ENCODE measurements at regions of chr17 and their contacts with region 1.

Region 1: DNA sequence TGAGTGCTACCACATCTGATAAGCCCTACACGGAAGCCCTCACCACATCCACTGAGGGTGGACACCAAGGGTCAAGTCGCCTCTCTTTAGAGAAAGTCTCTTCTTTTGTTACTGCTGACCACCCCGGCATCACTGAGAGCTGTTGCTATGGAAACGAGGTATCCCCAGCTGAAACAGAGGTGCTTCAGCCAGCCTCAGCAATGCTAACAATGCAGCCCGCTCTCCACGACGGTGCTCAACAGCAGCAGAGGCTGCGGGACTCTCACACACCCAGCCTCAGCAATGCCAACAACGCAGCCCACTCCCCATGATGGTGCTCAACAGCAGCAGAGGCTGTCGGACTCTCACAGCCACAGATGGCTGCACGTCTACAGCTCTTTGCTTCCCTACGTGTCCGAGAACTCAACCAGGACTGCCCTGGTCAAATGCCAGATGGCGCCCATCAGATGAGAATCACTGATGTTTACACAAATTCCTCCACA is 41.4 kb downstream of the VPS53 start:
- DNase-seq: peak; percentile 65
- ATAC-seq: peak; percentile 94
- H3K4me3 Mint-ChIP-seq: no peak overlapping the region
- H3K27ac Mint-ChIP-seq: peak overlapping the region; percentile 95
- H3K4me1 Mint-ChIP-seq: peaks cover 26% of the 10 kb centered on the region
- H3K27me3 Mint-ChIP-seq: no peaks in the 10 kb centered on the region
- CTCF ChIP-seq: no peak

Region 2: DNA sequence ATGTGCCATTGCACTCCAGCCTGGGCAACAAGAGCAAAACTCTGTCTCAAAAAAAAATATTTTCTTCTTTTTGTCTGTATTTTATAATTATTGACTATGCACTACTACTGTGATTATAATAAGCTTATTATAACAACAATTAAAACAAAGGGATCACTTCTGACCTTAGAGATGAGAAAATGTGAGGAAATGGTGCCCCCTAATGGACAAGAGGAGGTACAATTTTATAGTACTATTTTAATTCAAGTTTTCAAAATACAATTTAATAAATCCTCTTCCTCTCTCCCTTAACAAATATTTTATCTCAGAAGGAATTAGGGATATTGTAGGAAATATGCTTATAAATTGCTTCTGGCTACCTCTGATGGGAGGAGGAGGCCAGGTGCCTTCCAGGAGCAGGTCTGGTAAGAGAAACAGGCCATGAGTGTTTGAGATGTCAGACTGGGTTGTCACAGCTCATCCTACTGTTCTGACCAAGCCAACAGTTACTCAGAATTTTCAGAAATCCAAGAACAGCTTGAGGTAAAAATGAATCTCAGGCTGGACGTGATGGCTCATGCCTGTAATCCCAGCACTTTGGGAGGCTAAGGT is 27.4 kb after region 1 on chr17:
- CTCF ChIA-PET with region 1: interaction called, 14 read pairs
- POLR2A ChIA-PET with region 1: no interaction called
- DNase-seq: no peak
- ATAC-seq: no peak
- H3K4me3 Mint-ChIP-seq: no peak overlapping the region
- H3K27ac Mint-ChIP-seq: no peak overlapping the region
- H3K4me1 Mint-ChIP-seq: no peaks in the 10 kb centered on the region
- H3K27me3 Mint-ChIP-seq: no peaks in the 10 kb centered on the region
- CTCF ChIP-seq: peak; percentile 28

Region 3: GRCh38 chr17:740240-741017 is 67.2 kb after region 1 on chr17:
- CTCF ChIA-PET with region 1: no interaction called
- POLR2A ChIA-PET with region 1: no interaction called
- DNase-seq: no peak
- ATAC-seq: no peak
- H3K4me3 Mint-ChIP-seq: no peak overlapping the region
- H3K27ac Mint-ChIP-seq: no peak overlapping the region
- H3K4me1 Mint-ChIP-seq: no peaks in the 10 kb centered on the region
- H3K27me3 Mint-ChIP-seq: no peaks in the 10 kb centered on the region
- CTCF ChIP-seq: no peak

Measured in WTC11 (cell line).